Thyroid gland (tissue), 4 donors: ENCODE measurements at regions of chr3 and their contacts with region 1.

Region 1: GRCh38 chr3:141454906-141455430 is 31.9 kb upstream of the RASA2 start:
- DNase-seq: peak in 1 of 2 donors; percentile 10
- H3K4me3 ChIP-seq: no peak overlapping the region
- H3K27ac ChIP-seq: no peak overlapping the region
- H3K4me1 ChIP-seq: no peaks in the 10 kb centered on the region
- H3K27me3 ChIP-seq: no peaks in the 10 kb centered on the region
- CTCF ChIP-seq: peak; percentile 11 to 83 (median 68)
- POLR2A ChIP-seq: no peak

Region 2: DNA sequence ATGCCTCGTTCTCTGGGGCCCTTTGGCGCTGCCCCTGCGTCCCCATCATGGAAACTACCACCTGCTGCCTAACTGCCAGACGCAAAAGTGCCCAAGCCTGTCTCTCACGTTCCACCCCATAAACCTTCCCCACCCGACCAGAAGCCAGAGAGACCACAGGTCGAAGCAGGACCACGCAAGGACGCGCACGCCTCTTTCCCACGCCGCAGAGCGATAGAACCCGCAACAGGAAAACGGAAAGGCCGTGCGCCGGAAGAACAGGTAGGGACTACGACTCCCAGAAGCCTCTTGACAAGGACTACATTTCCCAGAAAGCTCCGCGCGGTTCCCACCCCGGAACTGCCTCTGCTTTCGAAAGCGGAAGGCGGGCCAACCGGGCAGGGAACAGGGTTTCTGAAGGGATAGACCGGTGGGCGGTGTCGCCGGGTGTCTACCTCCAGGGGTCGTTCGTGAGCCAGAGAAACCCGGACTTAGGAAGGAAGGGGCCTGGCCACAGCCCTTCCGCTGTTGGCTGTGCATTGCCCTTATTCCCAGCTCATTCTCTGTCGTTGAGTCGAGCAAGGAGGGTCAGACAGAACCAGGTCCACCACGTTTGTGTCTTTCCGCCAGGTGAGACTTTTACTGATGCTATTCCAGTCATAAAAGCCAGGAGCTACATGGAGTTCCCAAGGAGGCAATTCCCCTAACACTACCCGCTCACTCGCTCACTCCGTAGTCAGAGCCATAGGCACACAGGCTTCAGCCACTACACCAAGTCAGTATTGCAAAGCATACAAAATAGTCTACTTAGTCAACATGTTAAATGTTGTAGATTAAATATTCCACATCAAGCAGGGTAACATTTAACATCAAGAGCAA is 143.2 kb before region 1 on chr3:
- intact Hi-C with region 1: loop called (anchors 5 kb)
- DNase-seq: peak; percentile 98 to 99
- H3K4me3 ChIP-seq: peak overlapping the region; percentile 2 to 63 (median 60)
- H3K27ac ChIP-seq: peak overlapping the region; percentile 10 to 74 (median 71)
- H3K4me1 ChIP-seq: peaks cover 10 to 12% of the 10 kb centered on the region in 2 donors
- H3K27me3 ChIP-seq: no peaks in the 10 kb centered on the region
- CTCF ChIP-seq: peak in 5 of 6 experiments; percentile 45 to 78 (median 63)
- POLR2A ChIP-seq: peak; percentile 21 to 72

Region 3: GRCh38 chr3:141365836-141366235 is 89.1 kb before region 1 on chr3:
- intact Hi-C with region 1: loop called (anchors 2 kb)
- DNase-seq: no peak
- H3K4me3 ChIP-seq: no peak overlapping the region
- H3K27ac ChIP-seq: peak overlapping the region; percentile 89 to 96 (median 95)
- H3K4me1 ChIP-seq: peaks cover 36 to 53% of the 10 kb centered on the region in 2 donors
- H3K27me3 ChIP-seq: no peaks in the 10 kb centered on the region
- CTCF ChIP-seq: no peak
- POLR2A ChIP-seq: no peak